CD4-positive, alpha-beta memory T cell (primary cell): ENCODE measurements at regions of chr1 and their contacts with region 1.

Region 1: GRCh38 chr1:154335025-154335714 is 9.8 kb downstream of the ATP8B2 start:
- DNase-seq: peak; percentile 85 to 93 (median 87)
- H3K4me3 ChIP-seq: no peak overlapping the region
- H3K4me3 Mint-ChIP-seq: peak overlapping the region; percentile 68 to 90 (median 80)
- H3K27ac ChIP-seq: peak overlapping the region; percentile 52
- H3K27ac Mint-ChIP-seq: peak overlapping the region; percentile 86 to 99 (median 93)
- H3K4me1 ChIP-seq: peaks cover 93% of the 10 kb centered on the region
- H3K4me1 Mint-ChIP-seq: peaks cover 56 to 93% (median 75%) of the 10 kb centered on the region in 4 donors
- H3K27me3 ChIP-seq: no peaks in the 10 kb centered on the region
- H3K27me3 Mint-ChIP-seq: no peaks in the 10 kb centered on the region

Region 2: DNA sequence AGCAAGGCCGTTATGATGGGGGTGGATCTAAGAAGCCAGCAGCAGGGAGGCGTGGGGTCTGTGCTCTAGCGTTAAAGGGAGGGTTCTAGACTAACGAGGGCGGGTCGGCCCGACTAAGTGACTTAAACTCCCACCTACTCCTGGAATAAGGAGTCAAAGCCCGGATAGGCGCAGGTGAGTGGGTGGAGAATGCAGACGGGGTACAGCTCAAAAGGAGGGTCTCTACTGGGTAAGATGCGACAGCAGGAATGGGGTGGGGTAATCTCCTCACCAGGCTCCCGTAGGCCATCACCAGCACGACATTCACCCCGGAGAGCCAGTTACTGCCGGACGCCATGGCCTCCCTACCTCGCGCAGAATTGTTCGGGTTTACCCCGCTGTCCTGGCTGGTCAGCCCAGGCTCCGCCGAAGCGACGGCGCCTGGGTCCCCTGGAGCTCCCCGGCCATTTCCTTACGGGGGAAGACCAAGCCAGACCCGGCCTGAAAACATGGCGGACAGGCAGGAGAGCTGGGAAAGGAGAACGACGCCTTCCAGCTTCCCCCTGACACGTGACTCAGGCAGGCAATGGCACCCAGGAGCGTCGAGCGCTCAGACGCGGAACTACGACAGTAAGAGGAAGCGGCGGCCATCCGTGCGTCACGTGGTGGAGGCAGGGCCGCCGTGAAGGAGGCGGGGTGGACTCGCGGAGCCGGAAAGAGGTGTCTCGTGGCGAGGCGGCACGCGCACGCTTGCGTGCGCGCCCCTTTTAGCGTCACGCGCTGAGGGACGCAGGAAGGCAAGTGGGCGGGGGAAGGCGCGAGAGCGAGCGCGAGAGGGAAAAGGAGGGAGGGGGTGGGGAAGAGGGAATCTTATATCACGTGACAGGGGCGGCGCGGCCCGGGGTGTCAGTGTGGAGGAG is 114.8 kb before region 1 on chr1 and contains the start of gene UBAP2L:
- CTCF ChIA-PET with region 1: interaction called, 6 read pairs
- POLR2A ChIA-PET with region 1: interaction called, 13 read pairs
- intact Hi-C with region 1: loop called (anchors 2 kb)
- DNase-seq: peak; percentile 97 to 99 (median 99)
- H3K4me3 ChIP-seq: peak within 1 kb of the TSS; percentile 93 to 99
- H3K4me3 Mint-ChIP-seq: peak within 1 kb of the TSS; percentile 92 to 100 (median 97)
- H3K27ac ChIP-seq: peak within 1 kb of the TSS; percentile 97
- H3K27ac Mint-ChIP-seq: peak within 1 kb of the TSS; percentile 96 to 99 (median 99)
- H3K4me1 ChIP-seq: peaks cover 66% of the 10 kb centered on the region
- H3K4me1 Mint-ChIP-seq: peaks cover 52 to 78% (median 65%) of the 10 kb centered on the region in 4 donors
- H3K27me3 ChIP-seq: no peaks in the 10 kb centered on the region
- H3K27me3 Mint-ChIP-seq: no peaks in the 10 kb centered on the region
- total RNA-seq, gene UBAP2L: 180 to 189 TPM

Region 3: GRCh38 chr1:154272217-154272998 is 62.8 kb before region 1 on chr1 and contains the start of gene HAX1:
- CTCF ChIA-PET with region 1: interaction called, 48 read pairs
- POLR2A ChIA-PET with region 1: interaction called, 49 read pairs
- intact Hi-C with region 1: loop called (anchors 2 kb)
- DNase-seq: peak; percentile 93 to 99 (median 98)
- H3K4me3 ChIP-seq: peak within 1 kb of the TSS; percentile 66 to 85
- H3K4me3 Mint-ChIP-seq: peak within 1 kb of the TSS; percentile 89 to 98 (median 97)
- H3K27ac ChIP-seq: peak within 1 kb of the TSS; percentile 88
- H3K27ac Mint-ChIP-seq: peak within 1 kb of the TSS; percentile 97 to 99 (median 99)
- H3K4me1 ChIP-seq: peaks cover 27% of the 10 kb centered on the region
- H3K4me1 Mint-ChIP-seq: peaks cover 22 to 38% (median 29%) of the 10 kb centered on the region in 4 donors
- H3K27me3 ChIP-seq: no peaks in the 10 kb centered on the region
- H3K27me3 Mint-ChIP-seq: no peaks in the 10 kb centered on the region
- total RNA-seq, gene HAX1: 110 to 121 TPM

Region 4: GRCh38 chr1:154324669-154325582 is 10.2 kb before region 1 on chr1 and contains the start of gene ATP8B2:
- CTCF ChIA-PET with region 1: interaction called, 543 read pairs
- POLR2A ChIA-PET with region 1: interaction called, 728 read pairs
- intact Hi-C with region 1: loop called (anchors 1 kb)
- DNase-seq: peak; percentile 79 to 85 (median 81)
- H3K4me3 ChIP-seq: peak within 1 kb of the TSS; percentile 61 to 66
- H3K4me3 Mint-ChIP-seq: peak within 1 kb of the TSS; percentile 93 to 99 (median 98)
- H3K27ac ChIP-seq: peak within 1 kb of the TSS; percentile 89
- H3K27ac Mint-ChIP-seq: peak within 1 kb of the TSS; percentile 86 to 98 (median 96)
- H3K4me1 ChIP-seq: peaks cover 41% of the 10 kb centered on the region
- H3K4me1 Mint-ChIP-seq: peaks cover 22 to 49% (median 32%) of the 10 kb centered on the region in 4 donors
- H3K27me3 ChIP-seq: no peaks in the 10 kb centered on the region
- H3K27me3 Mint-ChIP-seq: no peaks in the 10 kb centered on the region
- total RNA-seq, gene ATP8B2: 186 TPM

Region 5: GRCh38 chr1:154386643-154387352 is 51.6 kb after region 1 on chr1:
- CTCF ChIA-PET with region 1: interaction called, 20 read pairs
- POLR2A ChIA-PET with region 1: interaction called, 6 read pairs
- intact Hi-C with region 1: no loop called
- DNase-seq: peak in 4 of 5 donors; percentile 43 to 86 (median 58)
- H3K4me3 ChIP-seq: peak overlapping the region in 1 of 2 donors; percentile 34
- H3K4me3 Mint-ChIP-seq: peak overlapping the region; percentile 79 to 88 (median 85)
- H3K27ac ChIP-seq: peak overlapping the region; percentile 67
- H3K27ac Mint-ChIP-seq: peak overlapping the region; percentile 88 to 99 (median 97)
- H3K4me1 ChIP-seq: peaks cover 36% of the 10 kb centered on the region
- H3K4me1 Mint-ChIP-seq: peaks cover 22 to 34% (median 28%) of the 10 kb centered on the region in 4 donors
- H3K27me3 ChIP-seq: no peaks in the 10 kb centered on the region
- H3K27me3 Mint-ChIP-seq: no peaks in the 10 kb centered on the region

Region 6: DNA sequence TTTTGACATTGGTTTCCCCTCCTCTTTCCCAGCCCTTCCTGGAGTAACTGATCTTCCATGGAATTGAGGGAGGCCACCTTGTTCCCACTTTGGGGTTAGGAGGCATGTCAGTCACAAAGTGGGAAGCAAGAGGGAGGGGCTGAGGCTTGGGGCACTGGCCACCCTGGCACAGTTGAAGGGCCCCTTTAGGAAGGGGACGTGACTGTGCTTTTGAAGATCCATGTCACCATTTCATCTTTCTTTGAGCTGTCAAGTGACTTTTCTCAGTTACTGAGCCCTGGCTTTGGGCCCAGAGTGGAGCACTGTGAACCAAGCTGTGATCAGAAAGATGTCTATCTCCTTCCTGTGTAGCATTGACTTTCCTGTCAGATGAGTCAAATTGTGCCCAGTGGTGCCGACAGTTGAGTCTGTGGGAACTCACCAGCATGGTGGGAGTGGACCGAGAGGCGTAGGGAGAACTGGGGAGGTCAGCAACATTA is 128.4 kb after region 1 on chr1:
- CTCF ChIA-PET with region 1: interaction called, 13 read pairs
- POLR2A ChIA-PET with region 1: interaction called, 6 read pairs
- intact Hi-C with region 1: no loop called
- DNase-seq: peak; percentile 74 to 88 (median 77)
- H3K4me3 ChIP-seq: no peak overlapping the region
- H3K4me3 Mint-ChIP-seq: peak overlapping the region; percentile 76 to 93 (median 86)
- H3K27ac ChIP-seq: peak overlapping the region; percentile 66
- H3K27ac Mint-ChIP-seq: peak overlapping the region; percentile 94 to 100 (median 98)
- H3K4me1 ChIP-seq: peaks cover 98% of the 10 kb centered on the region
- H3K4me1 Mint-ChIP-seq: peaks cover 57 to 92% (median 79%) of the 10 kb centered on the region in 4 donors
- H3K27me3 ChIP-seq: no peaks in the 10 kb centered on the region
- H3K27me3 Mint-ChIP-seq: no peaks in the 10 kb centered on the region

Region 7: GRCh38 chr1:154565876-154566275 is 230.7 kb after region 1 on chr1:
- CTCF ChIA-PET with region 1: no interaction called
- POLR2A ChIA-PET with region 1: no interaction called
- intact Hi-C with region 1: no loop called
- DNase-seq: no peak
- H3K4me3 ChIP-seq: no peak overlapping the region
- H3K4me3 Mint-ChIP-seq: no peak overlapping the region
- H3K27ac ChIP-seq: no peak overlapping the region
- H3K27ac Mint-ChIP-seq: no peak overlapping the region
- H3K4me1 ChIP-seq: peaks cover 6% of the 10 kb centered on the region
- H3K4me1 Mint-ChIP-seq: peaks cover 0 to 10% (median 3%) of the 10 kb centered on the region in 4 donors
- H3K27me3 ChIP-seq: peaks cover 16% of the 10 kb centered on the region
- H3K27me3 Mint-ChIP-seq: peaks cover 18 to 21% of the 10 kb centered on the region in 2 donors

Region 8: DNA sequence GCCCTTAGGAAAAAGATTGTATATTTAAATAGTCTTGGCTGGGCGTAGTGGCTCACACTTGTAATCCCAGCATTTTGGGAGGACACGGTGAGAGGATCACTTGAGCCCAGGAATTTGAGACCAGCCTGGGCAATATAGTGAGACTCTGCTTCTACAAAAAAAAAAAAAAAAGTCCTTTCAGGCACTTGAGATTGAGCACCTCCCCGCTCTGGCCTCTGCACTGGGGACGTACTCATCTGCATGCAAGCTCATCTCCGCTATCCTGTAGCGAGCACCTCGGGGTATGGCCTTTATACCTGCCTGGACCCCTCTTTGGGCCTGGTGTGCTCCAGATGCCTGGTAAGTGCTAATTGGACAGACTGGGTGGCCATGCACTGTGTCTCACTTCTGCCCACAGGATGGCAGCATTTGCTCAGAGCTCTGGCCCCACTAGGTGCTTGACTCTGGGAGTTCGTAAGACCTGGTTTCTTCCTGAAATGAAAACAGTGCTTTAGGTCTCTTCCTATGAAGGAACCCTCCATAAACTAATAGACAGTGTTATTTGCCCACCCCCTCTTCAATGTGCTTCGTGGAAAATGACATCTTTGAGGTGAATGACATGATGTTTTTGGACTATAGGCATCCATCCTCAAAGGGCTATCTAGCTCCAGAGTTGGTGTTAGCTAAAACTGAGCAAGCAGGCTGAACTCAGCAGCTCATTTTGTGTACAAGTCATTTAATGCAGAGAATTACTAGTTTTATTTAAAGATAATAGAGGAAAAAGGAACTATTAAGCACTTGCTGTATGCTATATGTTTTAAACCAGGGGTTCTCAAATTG is 334.5 kb after region 1 on chr1:
- CTCF ChIA-PET with region 1: no interaction called
- POLR2A ChIA-PET with region 1: no interaction called
- intact Hi-C with region 1: no loop called
- DNase-seq: peak; percentile 65 to 73 (median 68)
- H3K4me3 ChIP-seq: no peak overlapping the region
- H3K4me3 Mint-ChIP-seq: no peak overlapping the region
- H3K27ac ChIP-seq: no peak overlapping the region
- H3K27ac Mint-ChIP-seq: no peak overlapping the region
- H3K4me1 ChIP-seq: no peaks in the 10 kb centered on the region
- H3K4me1 Mint-ChIP-seq: no peaks in the 10 kb centered on the region
- H3K27me3 ChIP-seq: no peaks in the 10 kb centered on the region
- H3K27me3 Mint-ChIP-seq: peaks cover 2% of the 10 kb centered on the region in 2 donors